OCI-LY7 (cell line): ENCODE measurements at regions of chr14 and their contacts with region 1.

Region 1: GRCh38 chr14:68359837-68360552 is 432.9 kb downstream of the ZFP36L1 start:
- DNase-seq: no peak
- H3K4me3 ChIP-seq: no peak overlapping the region
- H3K27ac ChIP-seq: no peak overlapping the region
- H3K4me1 ChIP-seq: peaks cover 44% of the 10 kb centered on the region
- CTCF ChIP-seq: no peak

Region 2: GRCh38 chr14:68346556-68347343 is 13.2 kb before region 1 on chr14:
- CTCF ChIA-PET with region 1: no interaction called
- POLR2A ChIA-PET with region 1: interaction called, 15 read pairs
- intact Hi-C with region 1: no loop called
- DNase-seq: no peak
- H3K4me3 ChIP-seq: no peak overlapping the region
- H3K27ac ChIP-seq: no peak overlapping the region
- H3K4me1 ChIP-seq: peaks cover 27% of the 10 kb centered on the region
- CTCF ChIP-seq: no peak